PC-9 (cell line): ENCODE measurements at regions of chr15 and their contacts with region 1.

Region 1: GRCh38 chr15:66700802-66701421 is 1.1 kb upstream of the SMAD6 start:
- DNase-seq: peak; percentile 78 to 97
- H3K4me3 ChIP-seq: peak overlapping the region; percentile 81
- H3K27ac ChIP-seq: no peak overlapping the region
- H3K4me1 ChIP-seq: peaks cover 20% of the 10 kb centered on the region
- H3K27me3 ChIP-seq: no peaks in the 10 kb centered on the region
- CTCF ChIP-seq: no peak

Region 2: DNA sequence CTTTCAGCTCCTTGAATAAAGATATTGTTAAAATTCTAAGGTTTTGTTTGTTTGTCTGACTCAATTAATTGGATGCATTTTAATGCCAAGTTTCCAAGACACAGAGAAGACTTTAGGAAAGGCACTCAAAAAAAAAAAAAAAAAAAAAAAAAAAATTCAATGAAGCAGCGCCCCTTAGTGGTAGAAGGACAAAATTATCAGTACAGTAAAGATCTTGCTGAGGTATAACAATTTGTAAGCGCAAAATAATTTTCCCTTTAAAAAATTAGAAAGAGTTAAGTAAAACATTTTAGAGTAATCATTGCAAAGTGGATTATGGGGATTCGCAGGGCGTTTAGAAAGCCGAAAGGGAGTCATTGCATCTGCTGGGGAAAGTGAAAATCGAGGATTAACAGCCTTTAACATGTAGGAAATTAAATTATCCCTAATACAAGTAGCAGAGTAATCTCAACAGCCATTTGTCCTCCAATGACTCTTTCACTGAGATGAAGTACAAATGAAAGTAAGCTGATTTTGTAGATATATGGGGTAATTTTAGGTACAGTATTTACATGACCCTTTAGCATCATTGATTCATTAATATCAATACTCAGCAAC is 413.4 kb before region 1 on chr15:
- CTCF ChIA-PET with region 1: interaction called, 19 read pairs
- POLR2A ChIA-PET with region 1: no interaction called
- intact Hi-C with region 1: no loop called
- DNase-seq: peak in 1 of 2 experiments; percentile 42
- H3K4me3 ChIP-seq: no peak overlapping the region
- H3K27ac ChIP-seq: no peak overlapping the region
- H3K4me1 ChIP-seq: peaks cover 11% of the 10 kb centered on the region
- H3K27me3 ChIP-seq: no peaks in the 10 kb centered on the region
- CTCF ChIP-seq: peak; percentile 75

Region 3: GRCh38 chr15:66619151-66619903 is 81.6 kb before region 1 on chr15:
- CTCF ChIA-PET with region 1: interaction called, 15 read pairs
- POLR2A ChIA-PET with region 1: no interaction called
- intact Hi-C with region 1: loop called (anchors 1 kb)
- DNase-seq: peak; percentile 65 to 82
- H3K4me3 ChIP-seq: no peak overlapping the region
- H3K27ac ChIP-seq: no peak overlapping the region
- H3K4me1 ChIP-seq: peaks cover 4% of the 10 kb centered on the region; the same call in 1 of the 2 replicates
- H3K27me3 ChIP-seq: no peaks in the 10 kb centered on the region
- CTCF ChIP-seq: peak; percentile 80

Region 4: GRCh38 chr15:66662522-66662921 is 38.4 kb before region 1 on chr15:
- CTCF ChIA-PET with region 1: interaction called, 12 read pairs
- POLR2A ChIA-PET with region 1: no interaction called
- intact Hi-C with region 1: no loop called
- DNase-seq: no peak
- H3K4me3 ChIP-seq: no peak overlapping the region
- H3K27ac ChIP-seq: no peak overlapping the region
- H3K4me1 ChIP-seq: no peaks in the 10 kb centered on the region
- H3K27me3 ChIP-seq: no peaks in the 10 kb centered on the region
- CTCF ChIP-seq: no peak

Region 5: GRCh38 chr15:66774001-66774814 is 73.3 kb after region 1 on chr15:
- CTCF ChIA-PET with region 1: interaction called, 3 read pairs
- POLR2A ChIA-PET with region 1: no interaction called
- intact Hi-C with region 1: loop called (anchors 2 kb)
- DNase-seq: peak; percentile 66 to 92
- H3K4me3 ChIP-seq: no peak overlapping the region
- H3K27ac ChIP-seq: no peak overlapping the region
- H3K4me1 ChIP-seq: peaks cover 27% of the 10 kb centered on the region
- H3K27me3 ChIP-seq: no peaks in the 10 kb centered on the region
- CTCF ChIP-seq: peak; percentile 94

Region 6: GRCh38 chr15:66877477-66878271 is 176.8 kb after region 1 on chr15:
- CTCF ChIA-PET with region 1: interaction called, 12 read pairs
- POLR2A ChIA-PET with region 1: no interaction called
- intact Hi-C with region 1: no loop called
- DNase-seq: no peak
- H3K4me3 ChIP-seq: no peak overlapping the region
- H3K27ac ChIP-seq: no peak overlapping the region
- H3K4me1 ChIP-seq: peaks cover 9% of the 10 kb centered on the region
- H3K27me3 ChIP-seq: no peaks in the 10 kb centered on the region
- CTCF ChIP-seq: no peak